Prostate gland (tissue), 2 donors: ENCODE measurements at regions of chr15 and their contacts with region 1.

Region 1: GRCh38 chr15:35444557-35445204 is 101.3 kb downstream of the DPH6 start:
- DNase-seq: no peak
- H3K4me3 ChIP-seq: no peak overlapping the region
- H3K27ac ChIP-seq: no peak overlapping the region
- H3K4me1 ChIP-seq: no peaks in the 10 kb centered on the region
- H3K27me3 ChIP-seq: no peaks in the 10 kb centered on the region
- CTCF ChIP-seq: peak in 3 of 4 experiments; percentile 56 to 61 (median 57)
- POLR2A ChIP-seq: no peak

Region 2: GRCh38 chr15:35078221-35078915 is 366.3 kb before region 1 on chr15:
- intact Hi-C with region 1: loop called (anchors 5 kb)
- DNase-seq: peak; percentile 11
- H3K4me3 ChIP-seq: no peak overlapping the region
- H3K27ac ChIP-seq: peak overlapping the region in 1 of 2 donors; percentile 41
- H3K4me1 ChIP-seq: no peaks in the 10 kb centered on the region
- H3K27me3 ChIP-seq: no peaks in the 10 kb centered on the region
- CTCF ChIP-seq: peak in 3 of 4 experiments; percentile 59 to 72 (median 65)
- POLR2A ChIP-seq: no peak

Region 3: DNA sequence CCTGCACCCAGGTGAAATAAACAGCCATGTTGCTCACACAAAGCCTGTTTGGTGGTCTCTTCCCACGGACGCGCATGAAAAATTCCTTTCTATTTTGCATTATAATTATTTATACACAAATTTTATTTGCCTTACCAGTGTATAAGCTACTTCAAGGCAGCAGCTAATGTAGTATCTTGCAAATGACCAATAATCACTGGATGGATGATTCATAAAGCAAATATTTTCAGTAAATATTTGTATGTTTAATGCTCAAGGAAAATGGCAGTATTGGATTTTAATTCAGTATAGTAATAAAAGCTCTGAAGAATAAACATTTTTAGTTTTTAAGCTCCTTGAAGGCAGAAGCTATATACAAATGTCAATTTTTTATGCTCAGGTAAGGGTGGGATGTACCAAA is 200.9 kb before region 1 on chr15:
- intact Hi-C with region 1: no loop called
- DNase-seq: no peak
- H3K4me3 ChIP-seq: no peak overlapping the region
- H3K27ac ChIP-seq: no peak overlapping the region
- H3K4me1 ChIP-seq: no peaks in the 10 kb centered on the region
- H3K27me3 ChIP-seq: no peaks in the 10 kb centered on the region
- CTCF ChIP-seq: no peak
- POLR2A ChIP-seq: no peak